ENCODE measurements at regions of chr1 and their contacts with region 1.

Region 1: GRCh38 chr1:119204197-119204960 is 63.9 kb upstream of the WARS2 start:
- DNase-seq: no peak
- ATAC-seq: no peak
- H3K4me3 ChIP-seq: no peak overlapping the region
- H3K4me3 Mint-ChIP-seq: no peak overlapping the region
- H3K27ac ChIP-seq: no peak overlapping the region
- H3K27ac Mint-ChIP-seq: no peak overlapping the region
- H3K4me1 ChIP-seq: no peaks in the 10 kb centered on the region
- H3K4me1 Mint-ChIP-seq: no peaks in the 10 kb centered on the region
- H3K27me3 ChIP-seq: no peaks in the 10 kb centered on the region
- H3K27me3 Mint-ChIP-seq: no peaks in the 10 kb centered on the region
- CTCF ChIP-seq: no peak

Region 2: DNA sequence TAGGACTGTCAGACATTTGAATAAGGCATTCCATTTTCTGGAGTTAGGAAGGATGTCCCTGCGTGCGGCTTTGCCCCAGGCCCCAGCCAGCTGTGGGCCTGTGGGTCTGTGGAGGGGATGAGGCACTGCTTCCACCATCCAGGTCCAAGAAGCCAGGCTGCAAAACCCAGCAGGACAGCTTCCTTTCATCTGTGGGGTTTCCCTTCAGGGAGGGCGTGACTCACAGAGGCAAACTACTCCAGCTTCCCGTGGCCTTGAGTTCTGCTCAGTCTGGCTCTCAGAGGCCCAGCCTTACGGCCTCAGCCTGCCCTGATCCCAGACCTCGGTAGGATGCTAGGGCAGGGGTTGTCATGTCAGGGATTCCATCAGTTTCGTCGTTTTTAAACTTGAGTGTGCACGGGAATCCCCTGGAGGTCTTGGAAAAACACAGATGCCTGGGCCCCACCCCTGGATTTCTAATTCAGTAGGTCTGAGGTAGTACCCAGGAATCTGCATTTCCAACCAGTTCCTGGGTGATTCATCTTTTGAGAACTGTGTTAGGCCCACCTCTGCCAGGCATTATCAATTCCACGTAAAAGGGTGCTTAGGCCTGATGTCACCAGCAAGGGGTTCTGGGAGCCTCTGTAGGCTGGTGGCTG is 1630.9 kb before region 1 on chr1:
- CTCF ChIA-PET with region 1: no interaction called
- POLR2A ChIA-PET with region 1: no interaction called
- intact Hi-C with region 1: no loop called
- DNase-seq: peak in 2 of 14 experiments; percentile 16 to 34
- ATAC-seq: no peak
- H3K4me3 ChIP-seq: no peak overlapping the region
- H3K4me3 Mint-ChIP-seq: no peak overlapping the region
- H3K27ac ChIP-seq: no peak overlapping the region
- H3K27ac Mint-ChIP-seq: no peak overlapping the region
- H3K4me1 ChIP-seq: peaks cover 23% of the 10 kb centered on the region
- H3K4me1 Mint-ChIP-seq: peaks cover 30% of the 10 kb centered on the region
- H3K27me3 ChIP-seq: no peaks in the 10 kb centered on the region
- H3K27me3 Mint-ChIP-seq: no peaks in the 10 kb centered on the region
- CTCF ChIP-seq: no peak

Region 3: GRCh38 chr1:119220991-119221390 is 16.6 kb after region 1 on chr1:
- CTCF ChIA-PET with region 1: no interaction called
- POLR2A ChIA-PET with region 1: no interaction called
- intact Hi-C with region 1: loop called in 1 of 2 experiments (anchors 2 kb)
- DNase-seq: no peak
- ATAC-seq: no peak
- H3K4me3 ChIP-seq: no peak overlapping the region
- H3K4me3 Mint-ChIP-seq: no peak overlapping the region
- H3K27ac ChIP-seq: no peak overlapping the region
- H3K27ac Mint-ChIP-seq: no peak overlapping the region
- H3K4me1 ChIP-seq: no peaks in the 10 kb centered on the region
- H3K4me1 Mint-ChIP-seq: no peaks in the 10 kb centered on the region
- H3K27me3 ChIP-seq: no peaks in the 10 kb centered on the region
- H3K27me3 Mint-ChIP-seq: no peaks in the 10 kb centered on the region
- CTCF ChIP-seq: no peak